Psoas muscle (tissue), 8 donors: ENCODE measurements at regions of chr2 and their contacts with region 1.

Region 1: GRCh38 chr2:42804338-42804737 is 12.0 kb upstream of the HAAO start:
- DNase-seq: no peak
- ATAC-seq: peak; percentile 77 to 90 (median 88)
- H3K4me3 ChIP-seq: no peak overlapping the region
- H3K27ac ChIP-seq: peak overlapping the region; percentile 77
- H3K4me1 ChIP-seq: peaks cover 13% of the 10 kb centered on the region
- H3K27me3 ChIP-seq: no peaks in the 10 kb centered on the region
- CTCF ChIP-seq: no peak

Region 2: DNA sequence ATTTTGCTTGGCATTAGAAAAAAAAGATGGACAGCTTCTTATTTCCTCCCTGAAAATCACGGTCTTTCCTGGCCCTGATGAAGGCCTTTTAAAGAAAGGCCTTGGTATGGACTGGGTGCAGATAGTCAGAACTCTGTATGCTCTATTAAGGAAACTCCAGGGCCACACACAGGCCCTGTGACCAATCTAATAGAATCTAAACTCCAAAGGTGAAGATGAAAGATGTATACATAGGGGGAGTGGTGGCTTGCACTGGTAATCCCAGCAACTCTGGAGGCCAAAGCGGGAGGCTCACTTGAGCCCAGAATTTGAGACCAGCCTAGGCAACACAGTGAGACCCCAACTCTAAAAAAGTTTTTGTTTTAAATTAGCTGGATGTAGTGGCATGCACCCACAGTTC is 77.7 kb before region 1 on chr2:
- intact Hi-C with region 1: no loop called
- DNase-seq: no peak
- ATAC-seq: no peak
- H3K4me3 ChIP-seq: no peak overlapping the region
- H3K27ac ChIP-seq: no peak overlapping the region
- H3K4me1 ChIP-seq: no peaks in the 10 kb centered on the region
- H3K27me3 ChIP-seq: no peaks in the 10 kb centered on the region
- CTCF ChIP-seq: no peak

Region 3: DNA sequence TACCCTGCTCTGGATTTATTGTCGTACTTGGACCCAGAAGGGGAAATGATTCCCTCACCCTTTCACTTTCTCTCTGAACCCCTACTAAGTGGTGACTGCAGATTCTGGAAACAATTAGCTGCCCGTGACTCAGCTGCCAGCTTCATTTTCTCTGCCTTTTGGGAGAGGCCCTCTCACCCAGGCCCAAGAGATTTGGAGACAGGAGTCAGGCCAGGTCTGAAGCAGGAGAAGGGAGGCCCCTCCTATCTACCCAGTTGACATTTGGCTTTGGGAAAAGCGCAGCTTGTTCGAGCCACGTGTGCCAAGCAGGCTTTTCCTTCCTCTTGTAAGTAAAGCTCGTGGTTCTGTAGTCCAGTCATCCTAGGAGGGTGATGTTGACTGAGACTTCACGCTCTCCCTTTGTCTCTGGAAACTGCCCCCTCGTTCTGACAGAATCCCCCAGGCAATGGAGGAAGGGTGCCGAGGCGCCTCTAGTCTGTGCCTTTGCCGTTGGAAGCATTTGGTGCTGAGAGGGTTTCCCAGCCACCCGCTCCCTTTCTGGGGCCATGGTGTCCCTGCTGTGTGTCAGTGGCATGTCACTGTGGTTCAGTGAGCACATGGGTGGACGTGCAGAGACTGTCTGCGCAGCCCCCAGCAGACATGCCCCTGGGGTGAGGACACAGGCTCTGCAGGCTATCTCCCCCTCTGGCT is 49.0 kb before region 1 on chr2:
- intact Hi-C with region 1: loop called in 1 of 2 experiments (anchors 5 kb)
- DNase-seq: no peak
- ATAC-seq: no peak
- H3K4me3 ChIP-seq: no peak overlapping the region
- H3K27ac ChIP-seq: peak overlapping the region; percentile 91
- H3K4me1 ChIP-seq: peaks cover 25% of the 10 kb centered on the region
- H3K27me3 ChIP-seq: no peaks in the 10 kb centered on the region
- CTCF ChIP-seq: no peak

Region 4: GRCh38 chr2:42777883-42778805 is 26.2 kb before region 1 on chr2:
- intact Hi-C with region 1: no loop called
- DNase-seq: no peak
- ATAC-seq: peak in 3 of 4 donors; percentile 60 to 66 (median 60)
- H3K4me3 ChIP-seq: no peak overlapping the region
- H3K27ac ChIP-seq: no peak overlapping the region
- H3K4me1 ChIP-seq: no peaks in the 10 kb centered on the region
- H3K27me3 ChIP-seq: no peaks in the 10 kb centered on the region
- CTCF ChIP-seq: no peak